Activated naive CD4-positive, alpha-beta T cell treated with anti-CD3 and anti-CD28 coated beads for 36 hours (primary cell): ENCODE measurements at regions of chr4 and their contacts with region 1.

Region 1: DNA sequence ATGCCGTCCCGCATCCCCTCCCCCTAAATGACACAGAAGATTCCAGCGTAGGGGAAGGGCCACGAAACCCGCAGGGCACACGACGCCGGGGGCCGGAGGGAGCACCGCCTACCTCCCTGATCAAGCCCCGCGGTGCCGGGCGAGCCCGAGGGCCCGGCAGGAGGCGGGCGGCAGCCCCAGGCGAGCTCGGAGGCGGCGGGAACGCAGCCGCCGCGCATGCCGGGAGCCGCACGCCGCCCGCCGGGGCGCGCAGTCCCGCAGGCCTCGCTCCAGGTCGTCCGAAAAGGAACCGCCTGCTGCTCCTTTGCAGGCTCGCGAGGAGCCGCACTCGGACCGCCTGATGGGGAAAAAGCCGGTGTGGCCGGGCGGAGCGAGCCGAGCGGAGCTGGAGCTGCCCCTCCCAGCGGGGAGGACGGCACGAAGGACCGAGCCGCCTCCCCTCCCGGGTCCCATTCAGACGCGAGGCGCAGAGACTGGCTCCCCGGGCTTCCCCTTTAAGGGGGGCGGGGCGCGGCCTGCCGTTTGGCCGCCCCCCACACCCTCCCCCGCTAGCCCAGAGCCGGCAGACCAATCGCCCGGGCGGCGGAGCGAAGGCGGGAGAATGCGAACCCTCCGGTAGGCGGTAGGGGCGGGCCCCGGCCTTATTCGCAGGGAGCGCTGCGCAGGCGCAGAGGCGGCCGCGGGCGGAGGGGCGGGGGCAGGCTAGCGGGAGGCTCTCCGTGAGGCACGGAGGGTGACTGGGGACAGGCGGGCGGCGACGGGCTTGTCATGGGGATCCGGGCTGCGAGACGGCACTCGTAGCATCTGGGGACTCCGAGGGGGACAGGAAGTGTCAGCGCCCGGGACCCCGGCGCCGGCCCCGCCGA is 561 bp upstream of the ING2 start:
- DNase-seq: peak; percentile 98
- H3K4me3 Mint-ChIP-seq: peak overlapping the region; percentile 91
- H3K27ac Mint-ChIP-seq: peak overlapping the region; percentile 93
- H3K4me1 Mint-ChIP-seq: peaks cover 39% of the 10 kb centered on the region
- H3K27me3 Mint-ChIP-seq: no peaks in the 10 kb centered on the region

Region 2: GRCh38 chr4:183098723-183099536 is 405.4 kb before region 1 on chr4 and contains the start of gene WWC2:
- CTCF ChIA-PET with region 1: no interaction called
- intact Hi-C with region 1: loop called (anchors 2 kb)
- DNase-seq: peak; percentile 64
- H3K4me3 Mint-ChIP-seq: peak within 1 kb of the TSS; percentile 66
- H3K27ac Mint-ChIP-seq: no peak within 1 kb of the TSS
- H3K4me1 Mint-ChIP-seq: peaks cover 13% of the 10 kb centered on the region
- H3K27me3 Mint-ChIP-seq: peaks cover 23% of the 10 kb centered on the region
- total RNA-seq, gene WWC2: 6.7 to 10.0 TPM

Region 3: DNA sequence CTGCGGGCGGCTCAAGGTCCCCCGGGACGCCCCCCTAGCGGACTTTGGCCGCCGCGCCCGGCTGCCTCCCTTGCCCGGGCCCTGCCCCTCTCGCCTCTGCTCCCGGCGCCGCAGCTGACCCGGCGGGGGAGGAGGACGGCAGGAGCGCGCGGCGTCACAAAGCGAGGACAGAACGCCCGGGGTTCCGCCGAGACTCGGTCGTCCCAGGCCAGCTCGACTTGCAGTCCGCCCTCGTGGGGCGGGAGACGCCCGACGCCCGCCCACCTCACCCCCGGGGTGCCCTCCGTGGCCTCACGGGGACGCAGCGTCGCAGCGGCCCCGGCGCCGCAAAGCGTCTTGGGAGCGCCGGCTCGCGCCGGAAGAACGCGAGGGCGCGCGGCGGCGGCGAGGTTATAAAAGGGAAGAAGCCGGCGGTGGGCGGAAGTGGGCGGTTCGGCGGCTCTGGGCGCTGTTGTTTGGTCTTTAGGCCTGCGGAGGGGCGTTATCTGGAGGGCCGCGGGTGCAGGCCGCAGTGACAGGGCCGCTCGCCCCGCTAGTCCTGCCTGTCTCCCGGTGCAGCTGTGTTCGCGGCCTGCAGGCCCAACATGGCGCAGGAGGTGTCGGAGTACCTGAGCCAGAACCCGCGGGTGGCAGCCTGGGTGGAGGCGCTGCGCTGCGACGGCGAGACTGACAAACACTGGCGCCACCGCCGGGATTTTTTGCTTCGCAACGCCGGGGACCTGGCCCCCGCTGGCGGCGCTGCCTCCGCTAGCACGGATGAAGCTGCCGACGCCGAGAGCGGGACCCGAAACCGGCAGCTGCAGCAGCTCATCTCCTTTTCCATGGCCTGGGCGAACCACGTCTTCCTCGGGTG is 59.9 kb before region 1 on chr4 and contains the start of gene CDKN2AIP:
- CTCF ChIA-PET with region 1: interaction called, 4 read pairs
- intact Hi-C with region 1: loop called (anchors 1 kb)
- DNase-seq: peak; percentile 92
- H3K4me3 Mint-ChIP-seq: peak within 1 kb of the TSS; percentile 99
- H3K27ac Mint-ChIP-seq: peak within 1 kb of the TSS; percentile 98
- H3K4me1 Mint-ChIP-seq: peaks cover 41% of the 10 kb centered on the region
- H3K27me3 Mint-ChIP-seq: no peaks in the 10 kb centered on the region
- total RNA-seq, gene CDKN2AIP: 26.5 to 26.7 TPM

Region 4: DNA sequence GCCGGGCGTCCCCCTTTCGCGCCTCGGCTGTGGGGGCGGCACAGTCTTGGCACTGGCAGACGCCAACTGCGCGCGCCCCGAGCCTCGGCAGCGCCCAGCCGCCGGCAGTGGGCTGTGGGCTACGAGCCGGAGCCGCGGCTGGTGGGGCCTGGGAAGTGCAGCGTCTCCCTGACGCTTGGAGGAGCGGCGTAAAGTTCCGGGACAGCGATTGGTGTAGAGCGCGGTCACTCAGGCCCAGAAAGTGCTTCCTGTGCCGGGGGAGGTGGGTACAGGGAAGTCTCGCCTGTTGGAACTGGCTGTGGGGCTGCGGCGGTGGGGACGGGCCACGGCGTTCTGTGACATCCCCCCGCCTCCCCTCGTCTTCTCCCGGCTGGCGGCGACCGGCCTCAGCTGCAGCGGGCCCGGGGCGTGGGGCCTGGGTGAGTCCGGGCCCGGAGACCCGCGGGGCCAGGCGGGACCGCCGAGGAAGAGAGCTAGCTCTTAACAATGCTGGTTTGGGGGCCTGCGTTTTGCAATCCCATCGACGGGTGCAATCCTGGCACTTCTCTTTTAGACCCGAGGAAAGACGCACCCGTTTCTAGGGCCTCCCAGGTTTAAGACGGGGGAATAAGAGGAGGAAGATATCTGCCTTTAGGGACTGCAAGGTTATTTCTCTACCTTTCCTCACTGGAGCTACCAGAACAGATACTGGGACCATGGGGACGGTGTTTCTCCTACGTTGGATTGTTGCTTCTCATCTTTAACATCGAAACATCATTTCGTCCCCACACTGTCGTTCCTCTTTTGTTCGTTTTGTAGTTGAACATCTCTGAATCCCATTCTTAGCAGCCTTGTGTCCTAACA is 155.0 kb after region 1 on chr4 and contains the starts of genes RWDD4 and TRAPPC11:
- CTCF ChIA-PET with region 1: interaction called, 4 read pairs
- intact Hi-C with region 1: loop called (anchors 1 kb)
- DNase-seq: peak; percentile 98
- H3K4me3 Mint-ChIP-seq: peak within 1 kb of the TSS; percentile 96
- H3K27ac Mint-ChIP-seq: peak within 1 kb of the TSS; percentile 68
- H3K4me1 Mint-ChIP-seq: peaks cover 32% of the 10 kb centered on the region
- H3K27me3 Mint-ChIP-seq: no peaks in the 10 kb centered on the region
- total RNA-seq, gene RWDD4: 17.8 to 20.8 TPM
- total RNA-seq, gene TRAPPC11: 25.0 to 32.6 TPM

Region 5: DNA sequence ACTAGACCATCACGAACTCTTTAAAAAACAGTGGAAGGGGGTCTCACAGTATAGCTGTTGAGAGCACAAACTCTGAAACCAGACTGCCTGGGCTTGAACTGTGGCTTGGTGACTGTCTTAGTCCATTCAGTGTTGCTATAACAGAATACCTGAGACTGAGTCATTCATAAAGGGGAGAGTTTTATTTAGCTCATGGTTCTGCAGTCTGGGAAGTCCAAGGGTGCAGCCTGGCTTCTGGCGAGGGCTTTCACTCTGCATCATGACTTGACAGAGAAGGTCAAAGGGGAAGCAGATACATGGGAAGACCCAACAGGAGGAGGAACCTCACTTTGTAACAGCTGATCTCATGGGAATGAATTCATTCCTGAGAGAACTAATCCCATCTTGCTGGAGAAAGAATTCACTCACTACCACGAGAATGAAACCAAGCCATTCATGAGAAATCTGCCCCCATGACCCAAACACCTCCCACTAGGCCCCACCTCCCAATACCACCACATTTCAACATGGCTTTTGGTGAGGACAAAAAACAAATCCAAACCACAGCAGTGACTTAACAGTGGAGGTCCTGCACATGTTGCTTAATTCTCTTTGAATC is 284.1 kb after region 1 on chr4:
- CTCF ChIA-PET with region 1: no interaction called
- intact Hi-C with region 1: no loop called
- DNase-seq: no peak
- H3K4me3 Mint-ChIP-seq: no peak overlapping the region
- H3K27ac Mint-ChIP-seq: no peak overlapping the region
- H3K4me1 Mint-ChIP-seq: no peaks in the 10 kb centered on the region
- H3K27me3 Mint-ChIP-seq: peaks cover 33% of the 10 kb centered on the region

Region 6: DNA sequence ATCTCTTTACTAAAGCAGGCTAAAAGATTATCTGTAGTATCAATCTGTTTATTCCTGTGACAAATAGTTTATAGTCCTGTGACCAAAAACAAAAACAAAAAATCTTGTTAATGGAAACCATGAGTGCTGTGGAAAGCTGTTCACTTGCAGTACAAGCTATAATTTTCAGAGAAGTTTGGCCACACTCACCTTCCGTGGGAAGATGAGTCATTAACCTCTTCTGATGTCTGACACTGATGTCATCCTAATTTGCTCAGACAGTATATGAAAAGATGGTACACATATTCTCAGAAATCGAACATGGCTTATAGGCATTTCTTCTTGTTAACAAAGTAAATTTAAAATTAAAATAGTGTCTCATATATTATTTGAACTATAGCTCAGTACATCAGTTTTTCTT is 733.3 kb after region 1 on chr4:
- CTCF ChIA-PET with region 1: no interaction called
- intact Hi-C with region 1: loop called (anchors 5 kb)
- DNase-seq: peak; percentile 84
- H3K4me3 Mint-ChIP-seq: peak overlapping the region; percentile 32
- H3K27ac Mint-ChIP-seq: peak overlapping the region; percentile 93
- H3K4me1 Mint-ChIP-seq: peaks cover 40% of the 10 kb centered on the region
- H3K27me3 Mint-ChIP-seq: no peaks in the 10 kb centered on the region

Region 7: GRCh38 chr4:184763150-184763780 is 1259.0 kb after region 1 on chr4:
- CTCF ChIA-PET with region 1: no interaction called
- intact Hi-C with region 1: no loop called
- DNase-seq: no peak
- H3K4me3 Mint-ChIP-seq: no peak overlapping the region
- H3K27ac Mint-ChIP-seq: peak overlapping the region; percentile 46
- H3K4me1 Mint-ChIP-seq: peaks cover 22% of the 10 kb centered on the region
- H3K27me3 Mint-ChIP-seq: no peaks in the 10 kb centered on the region

Region 8: GRCh38 chr4:185142912-185143595 is 1638.8 kb after region 1 on chr4 and contains the start of gene SLC25A4:
- CTCF ChIA-PET with region 1: no interaction called
- intact Hi-C with region 1: loop called (anchors 10 kb)
- DNase-seq: peak; percentile 87
- H3K4me3 Mint-ChIP-seq: peak within 1 kb of the TSS; percentile 83
- H3K27ac Mint-ChIP-seq: no peak within 1 kb of the TSS
- H3K4me1 Mint-ChIP-seq: peaks cover 13% of the 10 kb centered on the region
- H3K27me3 Mint-ChIP-seq: peaks cover 11% of the 10 kb centered on the region
- total RNA-seq, gene SLC25A4: 4.3 to 5.0 TPM